ENCODE measurements at regions of chr22 and their contacts with region 1.

Region 1: DNA sequence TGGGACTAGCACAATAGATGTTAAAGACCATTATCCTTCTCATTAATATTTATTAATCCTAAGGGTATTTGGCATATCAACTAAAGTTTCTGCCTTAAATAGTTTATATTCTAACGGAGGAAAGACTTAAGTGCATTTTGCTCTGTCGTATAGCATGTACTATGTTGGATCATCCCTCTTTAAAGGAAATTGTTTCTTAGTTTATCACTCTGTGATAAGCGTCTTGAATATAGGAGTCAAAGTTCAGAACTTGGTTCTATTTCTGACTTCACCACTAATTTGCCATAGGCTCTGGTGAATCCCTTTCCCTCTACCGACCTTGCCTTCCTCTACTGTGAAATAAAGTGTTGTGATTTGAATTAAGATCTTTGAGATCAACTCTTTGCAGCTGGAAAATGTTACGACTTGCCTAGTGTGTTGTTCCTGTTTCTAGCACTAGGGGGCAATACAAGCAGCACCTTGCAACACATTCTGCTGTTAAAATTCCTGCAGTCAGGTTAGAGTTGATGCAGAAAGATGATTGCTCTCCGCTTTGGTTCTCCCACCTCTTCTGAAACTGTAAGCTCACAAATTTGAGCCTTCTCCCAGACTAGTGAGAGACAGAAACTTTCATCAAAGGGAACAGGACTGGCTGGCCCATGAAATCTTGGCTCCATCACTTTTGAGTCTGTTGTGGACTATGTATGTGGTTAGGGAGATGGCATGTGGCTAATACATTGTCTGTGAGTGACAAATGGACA is 27.8 kb upstream of the ZNRF3 start:
- DNase-seq: peak; percentile 42 to 91
- H3K4me3 ChIP-seq: no peak overlapping the region
- H3K27ac ChIP-seq: no peak overlapping the region
- H3K4me1 ChIP-seq: peaks cover 0 to 10% (median 4%) of the 10 kb centered on the region in 4 donors
- H3K27me3 ChIP-seq: no peaks in the 10 kb centered on the region
- CTCF ChIP-seq: peak in 6 of 7 experiments; percentile 35 to 95 (median 92)
- EP300 ChIP-seq: no peak
- POLR2A ChIP-seq: no peak

Region 2: GRCh38 chr22:28120691-28121592 is 734.6 kb before region 1 on chr22:
- intact Hi-C with region 1: no loop called
- DNase-seq: no peak
- H3K4me3 ChIP-seq: no peak overlapping the region
- H3K27ac ChIP-seq: no peak overlapping the region
- H3K4me1 ChIP-seq: peaks cover 0 to 16% (median 2%) of the 10 kb centered on the region in 4 donors
- H3K27me3 ChIP-seq: no peaks in the 10 kb centered on the region
- CTCF ChIP-seq: no peak
- EP300 ChIP-seq: no peak
- POLR2A ChIP-seq: no peak

Region 3: DNA sequence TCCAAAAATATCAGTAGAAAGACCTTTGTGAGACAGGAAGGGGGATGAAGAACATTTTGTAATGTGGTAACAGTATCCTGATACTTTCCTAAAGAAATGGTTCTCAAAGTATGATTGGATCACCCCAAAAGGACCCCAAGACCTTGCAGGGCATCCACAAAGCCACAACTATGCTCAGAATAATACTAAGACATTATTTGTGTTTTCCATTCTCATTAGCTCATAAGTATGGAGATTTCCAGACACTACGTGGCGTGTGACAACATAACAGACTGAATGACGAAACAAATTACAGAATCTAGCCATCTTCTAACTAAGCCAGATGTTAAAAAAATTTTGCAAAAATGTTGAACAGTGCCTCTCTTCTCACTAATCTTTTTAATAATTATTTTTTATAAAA is 138.8 kb before region 1 on chr22:
- intact Hi-C with region 1: no loop called
- DNase-seq: no peak
- H3K4me3 ChIP-seq: no peak overlapping the region
- H3K27ac ChIP-seq: no peak overlapping the region
- H3K4me1 ChIP-seq: peaks cover 0 to 3% (median 0%) of the 10 kb centered on the region in 4 donors
- H3K27me3 ChIP-seq: no peaks in the 10 kb centered on the region
- CTCF ChIP-seq: no peak
- EP300 ChIP-seq: no peak
- POLR2A ChIP-seq: no peak

Region 4: DNA sequence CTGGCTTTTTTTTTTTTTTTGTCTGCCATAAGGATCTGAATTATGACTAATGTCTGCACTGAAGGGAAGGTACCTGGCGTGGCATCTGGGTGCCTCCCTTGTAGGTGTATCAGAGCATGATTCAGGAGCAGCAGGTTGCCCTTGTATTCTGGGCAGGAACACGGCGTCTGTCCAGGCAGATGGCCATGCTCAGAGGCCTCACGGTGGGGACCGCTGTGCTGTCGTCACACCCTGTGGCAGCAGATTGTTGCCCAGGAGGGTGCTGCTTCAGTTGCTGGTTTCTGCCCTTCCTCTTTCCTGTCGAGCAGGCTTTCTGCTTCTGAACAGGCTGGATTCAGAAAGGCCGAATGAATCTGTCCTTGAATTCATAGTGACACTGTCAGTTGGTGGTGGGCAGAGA is 38.8 kb after region 1 on chr22:
- intact Hi-C with region 1: no loop called
- DNase-seq: peak in 1 of 2 donors; percentile 73
- H3K4me3 ChIP-seq: no peak overlapping the region
- H3K27ac ChIP-seq: no peak overlapping the region
- H3K4me1 ChIP-seq: peaks cover 0 to 65% (median 36%) of the 10 kb centered on the region in 4 donors
- H3K27me3 ChIP-seq: no peaks in the 10 kb centered on the region
- CTCF ChIP-seq: no peak
- EP300 ChIP-seq: no peak
- POLR2A ChIP-seq: no peak

Region 5: GRCh38 chr22:28969401-28970168 is 114.1 kb after region 1 on chr22:
- intact Hi-C with region 1: no loop called
- DNase-seq: no peak
- H3K4me3 ChIP-seq: no peak overlapping the region
- H3K27ac ChIP-seq: peak overlapping the region in 1 of 5 donors; percentile 22
- H3K4me1 ChIP-seq: peaks cover 5 to 20% (median 6%) of the 10 kb centered on the region in 4 donors
- H3K27me3 ChIP-seq: no peaks in the 10 kb centered on the region
- CTCF ChIP-seq: no peak
- EP300 ChIP-seq: no peak
- POLR2A ChIP-seq: no peak

Region 6: GRCh38 chr22:29040385-29041275 is 185.1 kb after region 1 on chr22:
- intact Hi-C with region 1: loop called (anchors 5 kb)
- DNase-seq: peak; percentile 74 to 94
- H3K4me3 ChIP-seq: no peak overlapping the region
- H3K27ac ChIP-seq: peak overlapping the region in 3 of 5 donors; percentile 46 to 67 (median 50)
- H3K4me1 ChIP-seq: peaks cover 15 to 49% (median 23%) of the 10 kb centered on the region in 4 donors
- H3K27me3 ChIP-seq: no peaks in the 10 kb centered on the region
- CTCF ChIP-seq: peak in 6 of 7 experiments; percentile 43 to 96 (median 96)
- EP300 ChIP-seq: no peak
- POLR2A ChIP-seq: no peak

Region 7: DNA sequence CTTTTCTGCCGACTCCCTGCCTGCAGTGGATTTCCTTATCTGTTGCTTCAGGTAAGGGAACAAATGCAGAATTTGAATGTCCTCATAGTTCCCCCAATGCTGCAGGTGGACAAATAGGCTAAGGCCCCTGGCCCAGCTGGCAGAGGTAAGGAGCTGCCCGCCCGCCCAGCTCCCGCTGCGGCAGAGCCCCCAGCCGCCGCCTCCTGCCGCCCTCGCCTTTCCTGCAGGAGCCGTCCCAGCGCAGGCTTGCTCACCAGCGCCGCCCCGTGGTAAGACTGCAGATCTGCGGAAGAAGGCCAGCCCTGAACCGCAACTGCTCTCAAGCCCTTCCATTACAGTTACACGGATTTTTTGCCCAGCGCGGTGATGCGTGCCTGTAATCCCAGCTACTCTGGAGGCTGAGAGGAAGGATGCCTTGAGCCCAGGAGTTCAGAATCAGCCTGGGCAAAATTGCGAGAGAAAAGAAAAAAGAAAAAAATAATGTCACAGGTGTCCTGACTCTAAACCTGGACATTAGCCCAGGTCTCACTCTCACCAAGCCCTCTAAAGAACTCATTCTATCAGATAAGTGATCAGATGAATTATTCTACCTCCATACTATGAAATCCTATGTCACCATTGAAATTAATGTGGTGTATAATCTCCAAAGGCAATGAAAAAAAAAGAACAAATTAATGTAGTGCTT is 299.0 kb after region 1 on chr22:
- intact Hi-C with region 1: loop called (anchors 10 kb)
- DNase-seq: peak; percentile 79 to 93
- H3K4me3 ChIP-seq: peak overlapping the region; percentile 21 to 37 (median 28)
- H3K27ac ChIP-seq: peak overlapping the region in 3 of 5 donors; percentile 13 to 74 (median 33)
- H3K4me1 ChIP-seq: peaks cover 5 to 33% (median 17%) of the 10 kb centered on the region in 4 donors
- H3K27me3 ChIP-seq: no peaks in the 10 kb centered on the region
- CTCF ChIP-seq: peak in 5 of 7 experiments; percentile 62 to 96 (median 94)
- EP300 ChIP-seq: no peak
- POLR2A ChIP-seq: no peak

Region 8: DNA sequence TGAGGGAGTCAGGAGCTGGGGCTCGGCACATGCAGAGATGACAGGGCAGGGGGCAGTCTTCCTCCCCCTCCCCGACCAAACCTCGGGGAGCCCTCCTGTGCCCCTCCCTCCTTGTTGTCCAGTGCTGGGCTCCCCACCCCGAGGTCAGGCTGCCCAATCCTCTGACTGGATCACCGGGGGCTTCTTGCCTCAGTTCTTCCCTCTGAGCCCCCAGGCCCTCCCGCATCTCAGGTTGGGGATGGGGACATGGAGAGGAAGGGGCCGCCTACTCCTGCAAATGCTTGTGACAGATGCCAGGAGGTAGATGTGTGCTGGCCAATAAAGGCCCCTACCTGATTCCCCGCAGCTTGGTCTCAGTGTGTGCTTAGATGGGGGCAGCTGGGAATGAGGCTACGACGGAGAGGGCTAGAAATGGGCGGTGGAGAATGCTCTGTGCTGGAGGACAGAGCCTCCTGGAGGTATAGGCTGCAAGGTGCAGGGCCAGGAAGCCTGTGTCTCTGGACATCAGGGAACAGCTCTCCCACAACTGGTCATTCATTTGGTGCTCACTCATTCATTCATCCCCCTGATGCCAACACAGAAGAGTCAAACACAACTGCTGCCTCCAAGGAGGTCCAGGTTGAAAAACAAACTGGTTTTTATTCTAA is 403.9 kb after region 1 on chr22:
- intact Hi-C with region 1: loop called (anchors 10 kb)
- DNase-seq: no peak
- H3K4me3 ChIP-seq: no peak overlapping the region
- H3K27ac ChIP-seq: no peak overlapping the region
- H3K4me1 ChIP-seq: no peaks in the 10 kb centered on the region
- H3K27me3 ChIP-seq: no peaks in the 10 kb centered on the region
- CTCF ChIP-seq: no peak
- EP300 ChIP-seq: no peak
- POLR2A ChIP-seq: no peak